ENCODE measurements at regions of chr22 and their contacts with region 1.

Region 1: GRCh38 chr22:20507253-20508066 is at the start of gene MED15:
- DNase-seq: peak; percentile 81 to 92 (median 82)
- H3K4me3 ChIP-seq: peak within 1 kb of the TSS; percentile 98
- H3K4me3 Mint-ChIP-seq: peak within 1 kb of the TSS; percentile 94 to 100 (median 97)
- H3K27ac ChIP-seq: peak within 1 kb of the TSS; percentile 99
- H3K27ac Mint-ChIP-seq: peak within 1 kb of the TSS; percentile 73 to 99 (median 97)
- H3K4me1 ChIP-seq: peaks cover 44% of the 10 kb centered on the region
- H3K4me1 Mint-ChIP-seq: peaks cover 48 to 56% (median 52%) of the 10 kb centered on the region in 3 donors
- H3K27me3 ChIP-seq: no peaks in the 10 kb centered on the region
- H3K27me3 Mint-ChIP-seq: peaks cover 0 to 1% of the 10 kb centered on the region in 2 donors
- total RNA-seq, gene MED15: 98.0 to 106 TPM

Region 2: DNA sequence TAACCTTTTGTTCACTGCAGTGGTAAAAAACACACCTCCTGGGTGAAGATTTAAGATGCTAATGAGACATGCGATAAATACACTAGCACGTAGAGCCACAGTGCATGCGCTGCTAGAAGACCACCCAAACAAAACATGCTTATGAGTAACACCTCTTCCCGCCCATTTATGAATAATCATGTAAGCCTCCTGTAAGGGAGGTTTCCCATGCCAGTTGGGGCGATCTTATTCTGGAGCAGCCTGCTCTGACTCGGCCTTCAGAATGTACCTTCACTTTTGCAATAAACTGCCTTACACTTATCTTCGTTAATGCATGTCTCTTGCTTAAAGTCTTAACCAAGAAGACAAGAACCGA is 51.8 kb before region 1 on chr22:
- CTCF ChIA-PET with region 1: no interaction called
- POLR2A ChIA-PET with region 1: no interaction called
- DNase-seq: no peak
- H3K4me3 ChIP-seq: no peak overlapping the region
- H3K4me3 Mint-ChIP-seq: no peak overlapping the region
- H3K27ac ChIP-seq: no peak overlapping the region
- H3K27ac Mint-ChIP-seq: peak overlapping the region in 1 of 8 donors; percentile 72
- H3K4me1 ChIP-seq: peaks cover 14% of the 10 kb centered on the region
- H3K4me1 Mint-ChIP-seq: peaks cover 20 to 30% (median 20%) of the 10 kb centered on the region in 3 donors
- H3K27me3 ChIP-seq: no peaks in the 10 kb centered on the region
- H3K27me3 Mint-ChIP-seq: no peaks in the 10 kb centered on the region

Region 3: GRCh38 chr22:20558567-20559205 is 51.2 kb after region 1 on chr22:
- CTCF ChIA-PET with region 1: interaction called, 16 read pairs
- POLR2A ChIA-PET with region 1: interaction called, 16 read pairs
- DNase-seq: no peak
- H3K4me3 ChIP-seq: no peak overlapping the region
- H3K4me3 Mint-ChIP-seq: peak overlapping the region in 5 of 7 donors; percentile 75 to 83 (median 80)
- H3K27ac ChIP-seq: no peak overlapping the region
- H3K27ac Mint-ChIP-seq: peak overlapping the region; percentile 89 to 99 (median 98)
- H3K4me1 ChIP-seq: peaks cover 67% of the 10 kb centered on the region
- H3K4me1 Mint-ChIP-seq: peaks cover 70 to 94% (median 92%) of the 10 kb centered on the region in 3 donors
- H3K27me3 ChIP-seq: no peaks in the 10 kb centered on the region
- H3K27me3 Mint-ChIP-seq: no peaks in the 10 kb centered on the region

Region 4: GRCh38 chr22:20568989-20569769 is 61.7 kb after region 1 on chr22:
- CTCF ChIA-PET with region 1: interaction called, 29 read pairs
- POLR2A ChIA-PET with region 1: interaction called, 23 read pairs
- DNase-seq: peak; percentile 74 to 95 (median 94)
- H3K4me3 ChIP-seq: peak overlapping the region; percentile 57
- H3K4me3 Mint-ChIP-seq: peak overlapping the region; percentile 85 to 92 (median 89)
- H3K27ac ChIP-seq: peak overlapping the region; percentile 26
- H3K27ac Mint-ChIP-seq: peak overlapping the region; percentile 94 to 100 (median 99)
- H3K4me1 ChIP-seq: peaks cover 83% of the 10 kb centered on the region
- H3K4me1 Mint-ChIP-seq: peaks cover 83 to 93% (median 93%) of the 10 kb centered on the region in 3 donors
- H3K27me3 ChIP-seq: no peaks in the 10 kb centered on the region
- H3K27me3 Mint-ChIP-seq: peaks cover 0 to 3% of the 10 kb centered on the region in 2 donors

Measured in CD8-positive, alpha-beta memory T cell (primary cell).